ENCODE measurements at regions of chr1 and their contacts with region 1.

Region 1: GRCh38 chr1:153946622-153947241 is at the start of gene DENND4B:
- DNase-seq: peak; percentile 74
- H3K4me3 Mint-ChIP-seq: peak within 1 kb of the TSS; percentile 88
- H3K27ac Mint-ChIP-seq: peak within 1 kb of the TSS; percentile 97
- H3K4me1 Mint-ChIP-seq: peaks cover 35% of the 10 kb centered on the region
- H3K27me3 Mint-ChIP-seq: no peaks in the 10 kb centered on the region
- total RNA-seq, gene DENND4B: 128 and 133 TPM in 2 replicates

Region 2: GRCh38 chr1:153805042-153805745 is 141.5 kb before region 1 on chr1:
- intact Hi-C with region 1: loop called (anchors 2 kb)
- DNase-seq: peak; percentile 44
- H3K4me3 Mint-ChIP-seq: peak overlapping the region; percentile 12
- H3K27ac Mint-ChIP-seq: peak overlapping the region; percentile 79
- H3K4me1 Mint-ChIP-seq: peaks cover 26% of the 10 kb centered on the region
- H3K27me3 Mint-ChIP-seq: no peaks in the 10 kb centered on the region

Region 3: DNA sequence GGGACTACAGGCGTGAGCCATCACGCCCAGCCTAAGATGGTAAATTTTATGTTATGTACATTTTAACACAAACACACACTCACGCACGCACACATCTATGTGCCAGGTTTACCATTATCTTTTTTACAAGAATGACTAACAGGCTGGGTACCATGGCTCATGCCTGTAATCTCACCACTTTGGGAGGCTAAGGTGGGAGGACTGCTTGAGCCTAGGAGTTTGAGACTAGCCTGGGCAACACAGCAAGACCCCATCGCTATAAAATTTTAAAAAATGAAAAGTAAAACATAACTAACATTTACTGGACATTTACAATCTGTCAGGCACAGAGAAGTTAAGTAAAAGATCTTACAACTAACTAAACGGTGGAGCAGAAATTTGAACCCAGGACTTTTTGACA is 38.7 kb before region 1 on chr1:
- intact Hi-C with region 1: loop called (anchors 5 kb)
- DNase-seq: no peak
- H3K4me3 Mint-ChIP-seq: no peak overlapping the region
- H3K27ac Mint-ChIP-seq: peak overlapping the region; percentile 40
- H3K4me1 Mint-ChIP-seq: peaks cover 13% of the 10 kb centered on the region
- H3K27me3 Mint-ChIP-seq: no peaks in the 10 kb centered on the region

Region 4: GRCh38 chr1:153967082-153968000 is 20.6 kb after region 1 on chr1 and contains the start of gene CREB3L4:
- intact Hi-C with region 1: loop called (anchors 1 kb)
- DNase-seq: peak; percentile 80
- H3K4me3 Mint-ChIP-seq: peak within 1 kb of the TSS; percentile 97
- H3K27ac Mint-ChIP-seq: peak within 1 kb of the TSS; percentile 95
- H3K4me1 Mint-ChIP-seq: peaks cover 52% of the 10 kb centered on the region
- H3K27me3 Mint-ChIP-seq: no peaks in the 10 kb centered on the region
- total RNA-seq, gene CREB3L4: 8.1 and 9.8 TPM in 2 replicates

Region 5: DNA sequence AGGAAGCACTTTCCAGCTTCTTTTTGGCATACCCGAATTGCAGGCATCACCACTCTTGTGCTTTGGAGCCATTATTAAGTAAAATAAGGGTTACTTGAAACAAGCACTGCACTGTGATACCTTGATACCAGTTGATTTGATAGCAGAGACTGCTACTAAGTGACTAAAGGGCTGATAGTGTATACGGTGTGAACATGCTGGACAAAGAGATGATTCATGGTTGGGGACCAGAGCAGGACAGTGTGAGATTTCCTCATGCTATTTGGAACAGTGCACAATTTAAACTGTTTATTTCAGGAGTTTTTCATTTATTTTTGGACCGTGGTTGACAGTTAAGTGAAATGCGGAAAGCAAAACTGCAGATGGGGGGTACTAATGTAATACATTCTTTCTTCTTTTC is 53.7 kb after region 1 on chr1:
- intact Hi-C with region 1: no loop called
- DNase-seq: no peak
- H3K4me3 Mint-ChIP-seq: no peak overlapping the region
- H3K27ac Mint-ChIP-seq: no peak overlapping the region
- H3K4me1 Mint-ChIP-seq: no peaks in the 10 kb centered on the region
- H3K27me3 Mint-ChIP-seq: no peaks in the 10 kb centered on the region